ENCODE measurements at regions of chr11 and their contacts with region 1.

Region 1: DNA sequence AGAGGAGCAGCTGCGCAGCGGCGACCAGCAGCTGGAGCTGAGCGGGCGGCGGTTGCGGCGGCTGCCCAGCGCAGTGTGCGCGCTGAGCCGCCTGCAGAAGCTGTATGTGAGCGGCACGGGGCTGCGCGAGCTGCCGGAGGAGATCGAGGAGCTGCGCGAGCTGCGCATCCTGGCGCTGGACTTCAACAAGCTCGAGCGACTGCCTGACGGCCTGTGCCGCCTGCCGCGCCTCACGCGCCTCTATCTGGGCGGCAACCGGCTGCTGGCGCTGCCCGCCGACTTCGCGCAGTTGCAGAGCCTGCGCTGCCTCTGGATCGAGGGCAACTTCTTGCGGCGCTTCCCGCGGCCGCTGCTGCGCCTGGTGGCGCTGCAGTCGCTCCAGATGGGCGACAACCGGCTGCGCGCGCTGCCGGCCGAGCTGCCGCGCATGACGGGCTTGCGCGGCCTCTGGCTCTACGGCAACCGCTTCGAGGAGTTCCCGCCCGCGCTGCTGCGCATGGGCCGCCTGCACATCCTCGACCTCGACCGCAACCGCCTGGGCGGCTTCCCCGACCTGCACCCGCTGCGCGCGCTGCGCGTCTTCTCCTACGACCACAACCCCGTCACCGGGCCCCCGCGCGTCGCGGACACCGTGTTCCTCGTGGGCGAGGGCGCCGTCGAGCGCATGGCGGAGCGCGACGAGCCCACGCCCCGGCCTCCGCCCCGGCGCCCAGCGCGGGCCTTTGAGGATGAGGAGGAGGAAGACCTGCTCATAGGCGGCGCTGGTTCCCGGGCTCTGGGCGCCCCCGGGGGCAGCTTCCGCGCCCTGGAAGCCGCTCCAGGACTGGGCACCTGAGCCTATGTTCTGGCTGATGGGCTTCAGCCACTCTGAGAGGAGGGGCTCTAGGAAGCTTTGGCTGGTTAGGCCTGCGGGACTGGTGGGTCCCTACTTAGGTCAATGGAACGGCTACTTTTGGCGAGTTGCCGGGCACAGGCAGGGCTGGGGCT is 787 bp downstream of the LRRC10B start:
- DNase-seq: peak in 9 of 10 donors; percentile 32 to 77 (median 60)
- H3K4me3 ChIP-seq: peak overlapping the region in 58 of 59 donors; percentile 6 to 65 (median 47)
- H3K27ac ChIP-seq: peak overlapping the region in 55 of 59 donors; percentile 39 to 91 (median 74)
- H3K27me3 ChIP-seq: peaks cover 0 to 52% (median 14%) of the 10 kb centered on the region in 45 donors
- CTCF ChIP-seq: peak in 52 of 56 donors; percentile 9 to 63 (median 48)

Region 2: DNA sequence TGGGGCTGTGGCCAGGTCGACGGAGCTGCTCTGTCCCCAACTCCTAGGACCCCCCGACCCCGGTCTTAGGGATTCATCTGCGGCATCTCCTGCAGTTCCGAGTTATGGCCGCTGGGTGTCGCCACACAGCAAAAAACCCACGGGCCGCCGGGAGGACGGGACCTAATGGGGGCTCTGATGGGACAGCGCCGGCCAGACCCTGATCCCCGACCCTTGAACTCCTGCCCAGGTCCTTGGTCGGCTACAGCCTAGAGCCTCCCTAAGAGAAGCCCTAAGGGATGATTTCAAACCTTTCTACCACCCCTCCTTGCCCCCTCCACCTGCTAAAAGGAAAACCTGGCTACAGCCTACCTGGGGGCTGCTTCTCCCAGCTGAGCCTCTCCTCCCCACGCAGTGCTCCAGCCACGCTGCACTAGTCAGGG is 31.6 kb before region 1 on chr11:
- intact Hi-C with region 1: loop called in 1 of 2 experiments (anchors 5 kb)
- DNase-seq: peak in 7 of 10 donors; percentile 30 to 75 (median 50)
- H3K4me3 ChIP-seq: peak overlapping the region in 6 of 59 donors; percentile 1 to 28 (median 10)
- H3K27ac ChIP-seq: peak overlapping the region in 13 of 59 donors; percentile 1 to 73 (median 28)
- H3K27me3 ChIP-seq: no peaks in the 10 kb centered on the region
- CTCF ChIP-seq: peak; percentile 82 to 98 (median 94)